WTC11 (cell line): ENCODE measurements at regions of chr16 and their contacts with region 1.

Region 1: DNA sequence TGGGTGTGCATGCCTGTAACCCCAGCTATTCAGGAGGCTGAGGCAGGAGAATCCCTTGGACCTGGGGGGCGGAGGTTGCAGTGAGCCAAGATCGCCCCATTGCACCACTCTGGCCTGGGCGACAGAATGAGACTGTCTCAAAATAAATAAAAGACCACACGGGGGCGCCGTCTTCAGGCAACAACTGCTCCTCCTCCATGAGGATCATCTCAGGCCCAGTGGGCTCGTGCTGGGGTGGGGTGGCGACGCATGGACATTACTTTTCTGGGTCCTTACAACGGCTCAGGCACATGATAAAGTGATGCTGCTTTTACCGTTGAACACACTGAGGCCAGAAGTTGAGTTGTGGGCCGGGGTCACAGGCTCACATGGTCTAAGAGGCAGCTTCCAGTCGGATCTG is 56.2 kb downstream of the PRMT7 start:
- DNase-seq: peak; percentile 75
- ATAC-seq: peak; percentile 69
- H3K4me3 Mint-ChIP-seq: no peak overlapping the region
- H3K27ac Mint-ChIP-seq: 0 out of 2 replicates have a peak overlapping the region, but pooled peaks have one; percentile 76
- H3K4me1 Mint-ChIP-seq: peaks cover 30% of the 10 kb centered on the region
- H3K27me3 Mint-ChIP-seq: peaks cover 2% of the 10 kb centered on the region; the same call in 1 of the 2 replicates
- CTCF ChIP-seq: peak; percentile 32; the same call in 1 of the 2 replicates

Region 2: GRCh38 chr16:68275611-68276191 is 91.3 kb before region 1 on chr16:
- CTCF ChIA-PET with region 1: no interaction called
- POLR2A ChIA-PET with region 1: no interaction called
- DNase-seq: no peak
- ATAC-seq: no peak
- H3K4me3 Mint-ChIP-seq: no peak overlapping the region
- H3K27ac Mint-ChIP-seq: peak overlapping the region; percentile 91
- H3K4me1 Mint-ChIP-seq: peaks cover 3% of the 10 kb centered on the region; the same call in 1 of the 2 replicates
- H3K27me3 Mint-ChIP-seq: no peaks in the 10 kb centered on the region
- CTCF ChIP-seq: no peak

Region 3: DNA sequence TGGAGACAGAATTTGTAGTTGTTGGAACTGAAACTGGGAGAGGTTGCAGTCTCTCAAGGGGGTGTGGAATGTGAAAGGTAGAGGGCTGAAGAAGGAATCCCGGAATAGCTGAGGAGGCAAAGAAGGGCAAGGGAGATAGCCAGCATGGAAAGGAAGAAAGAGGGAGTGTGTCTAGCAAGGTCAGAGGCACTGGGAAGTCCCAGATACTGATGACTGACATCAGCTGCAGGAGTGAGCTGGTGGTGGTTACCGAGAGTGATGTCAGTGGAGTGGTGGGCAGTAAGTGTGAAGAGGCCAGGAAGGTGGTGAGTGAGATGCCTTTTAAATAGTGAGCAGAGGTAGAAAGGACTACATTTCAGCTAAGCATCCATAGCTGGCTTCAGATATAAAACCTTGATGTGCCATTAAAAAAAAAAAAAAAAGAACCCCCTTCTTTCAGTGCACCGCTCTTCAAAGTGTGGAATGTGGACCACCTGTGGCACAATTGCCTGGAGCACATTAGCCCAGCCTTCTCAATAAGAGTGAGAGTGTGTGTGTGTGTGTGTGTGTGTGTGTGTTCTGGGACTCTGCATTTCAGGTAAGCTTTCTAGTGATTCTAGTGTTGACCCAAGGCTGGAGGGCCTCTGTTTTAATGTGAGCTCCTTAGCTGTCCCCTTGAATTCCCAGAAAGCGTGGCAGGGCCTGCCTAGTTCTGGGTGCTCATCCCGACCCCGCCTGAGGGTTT is 47.7 kb before region 1 on chr16:
- CTCF ChIA-PET with region 1: no interaction called
- POLR2A ChIA-PET with region 1: no interaction called
- DNase-seq: no peak
- ATAC-seq: no peak
- H3K4me3 Mint-ChIP-seq: no peak overlapping the region
- H3K27ac Mint-ChIP-seq: peak overlapping the region; percentile 32; the same call in 1 of the 2 replicates
- H3K4me1 Mint-ChIP-seq: peaks cover 3% of the 10 kb centered on the region
- H3K27me3 Mint-ChIP-seq: no peaks in the 10 kb centered on the region
- CTCF ChIP-seq: no peak

Region 4: GRCh38 chr16:68382296-68382718 is 15.3 kb after region 1 on chr16:
- CTCF ChIA-PET with region 1: interaction called, 19 read pairs
- POLR2A ChIA-PET with region 1: no interaction called
- DNase-seq: peak; percentile 59
- ATAC-seq: peak; percentile 82
- H3K4me3 Mint-ChIP-seq: no peak overlapping the region
- H3K27ac Mint-ChIP-seq: no peak overlapping the region
- H3K4me1 Mint-ChIP-seq: peaks cover 36% of the 10 kb centered on the region
- H3K27me3 Mint-ChIP-seq: no peaks in the 10 kb centered on the region
- CTCF ChIP-seq: peak; percentile 56

Region 5: GRCh38 chr16:68436581-68436980 is 69.6 kb after region 1 on chr16:
- CTCF ChIA-PET with region 1: interaction called, 13 read pairs
- POLR2A ChIA-PET with region 1: interaction called, 3 read pairs
- DNase-seq: peak; percentile 63
- ATAC-seq: peak; percentile 48
- H3K4me3 Mint-ChIP-seq: no peak overlapping the region
- H3K27ac Mint-ChIP-seq: no peak overlapping the region
- H3K4me1 Mint-ChIP-seq: peaks cover 4% of the 10 kb centered on the region; the same call in 1 of the 2 replicates
- H3K27me3 Mint-ChIP-seq: peaks cover 26% of the 10 kb centered on the region
- CTCF ChIP-seq: peak; percentile 55

Region 6: GRCh38 chr16:68448360-68448970 is 81.4 kb after region 1 on chr16 and contains the start of gene SMPD3:
- CTCF ChIA-PET with region 1: interaction called, 20 read pairs
- POLR2A ChIA-PET with region 1: no interaction called
- DNase-seq: peak; percentile 100
- ATAC-seq: peak; percentile 94
- H3K4me3 Mint-ChIP-seq: peak within 1 kb of the TSS; percentile 85
- H3K27ac Mint-ChIP-seq: no peak within 1 kb of the TSS
- H3K4me1 Mint-ChIP-seq: peaks cover 10% of the 10 kb centered on the region
- H3K27me3 Mint-ChIP-seq: peaks cover 34% of the 10 kb centered on the region
- CTCF ChIP-seq: no peak
- total RNA-seq, gene SMPD3: 0.99 to 1.4 TPM (median 1.2 TPM) in 3 replicates

Region 7: GRCh38 chr16:68605746-68606145 is 238.7 kb after region 1 on chr16:
- CTCF ChIA-PET with region 1: no interaction called
- POLR2A ChIA-PET with region 1: no interaction called
- DNase-seq: no peak
- ATAC-seq: peak; percentile 44
- H3K4me3 Mint-ChIP-seq: no peak overlapping the region
- H3K27ac Mint-ChIP-seq: peak overlapping the region; percentile 80; the same call in 1 of the 2 replicates
- H3K4me1 Mint-ChIP-seq: peaks cover 12% of the 10 kb centered on the region
- H3K27me3 Mint-ChIP-seq: no peaks in the 10 kb centered on the region
- CTCF ChIP-seq: no peak